ENCODE measurements at regions of chr6 and their contacts with region 1.

Region 1: GRCh38 chr6:37847704-37848103 is 28.2 kb downstream of the ZFAND3 start:
- DNase-seq: no peak
- H3K4me3 ChIP-seq: no peak overlapping the region
- H3K27me3 ChIP-seq: no peaks in the 10 kb centered on the region
- CTCF ChIP-seq: no peak

Region 2: DNA sequence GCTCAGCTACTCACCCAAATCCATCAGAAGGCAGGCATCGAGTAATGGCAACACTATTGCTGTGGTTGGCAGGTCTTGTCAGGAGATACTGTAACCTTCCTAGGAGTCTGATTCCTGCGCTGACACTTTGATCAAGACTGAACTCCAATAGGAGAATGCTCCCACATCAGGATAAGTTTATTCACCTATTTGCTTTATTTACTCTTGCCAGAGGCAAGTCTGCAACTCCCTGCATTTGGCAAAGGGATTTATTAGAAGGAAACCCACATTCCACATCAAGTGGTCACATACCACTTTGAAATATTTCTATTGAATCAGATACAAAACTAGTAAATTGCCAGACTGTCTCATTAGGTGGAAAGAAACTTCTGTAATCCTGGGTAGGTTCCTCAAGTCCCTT is 15.3 kb after region 1 on chr6:
- CTCF ChIA-PET with region 1: interaction called, 7 read pairs
- POLR2A ChIA-PET with region 1: interaction called, 10 read pairs
- DNase-seq: peak; percentile 50
- H3K4me3 ChIP-seq: no peak overlapping the region
- H3K27me3 ChIP-seq: no peaks in the 10 kb centered on the region
- CTCF ChIP-seq: no peak

Measured in BJ (cell line).